Head of caudate nucleus (tissue), 42 donors: ENCODE measurements at regions of chr4 and their contacts with region 1.

Region 1: DNA sequence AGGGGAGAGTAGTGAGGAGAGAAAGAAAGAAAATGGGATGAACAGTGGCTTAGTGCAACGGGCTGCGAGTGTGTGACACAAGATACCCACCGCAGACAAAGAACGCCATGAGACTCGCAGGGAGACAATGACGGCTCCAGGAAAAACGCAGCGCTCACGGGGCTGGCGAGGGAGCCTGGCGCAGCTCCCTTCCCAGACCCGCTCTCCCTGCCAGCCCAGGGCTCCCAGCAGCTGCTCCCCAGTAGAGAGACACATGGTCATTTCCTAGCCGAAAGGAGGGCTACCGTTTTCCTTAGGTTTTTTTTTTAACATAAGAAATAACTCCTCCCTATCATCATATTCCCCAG is 149.5 kb downstream of the MAML3 start:
- DNase-seq: peak in 41 of 42 donors; percentile 23 to 78 (median 55)

Region 2: DNA sequence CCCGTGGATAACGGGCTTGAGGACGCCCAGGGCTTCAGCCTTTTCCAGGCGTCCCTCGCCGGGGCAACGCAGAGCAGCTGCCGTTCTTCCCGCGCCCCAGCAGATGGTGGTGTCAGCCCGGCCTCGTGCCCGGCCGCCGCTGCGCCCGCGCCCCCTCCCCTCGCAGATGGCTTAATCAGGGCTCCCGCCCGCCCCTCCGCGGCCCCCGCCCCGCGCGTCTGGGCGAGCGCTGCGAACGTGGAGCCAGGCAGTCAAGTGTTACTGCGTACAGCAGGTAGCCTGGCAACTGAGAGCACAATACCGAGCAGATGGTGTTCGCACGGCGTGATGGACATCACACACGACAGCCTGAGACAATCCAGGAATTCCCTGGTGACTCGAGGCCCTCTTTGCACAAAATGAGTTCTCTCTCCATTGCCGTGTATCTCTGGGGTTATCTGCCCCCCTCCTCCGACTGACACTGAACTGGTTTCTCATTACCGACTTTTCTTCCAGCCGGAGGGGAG is 269.6 kb before region 1 on chr4:
- intact Hi-C with region 1: loop called (anchors 10 kb)
- DNase-seq: peak; percentile 68 to 96 (median 91)